T-cell (primary cell): ENCODE measurements at regions of chr7 and their contacts with region 1.

Region 1: DNA sequence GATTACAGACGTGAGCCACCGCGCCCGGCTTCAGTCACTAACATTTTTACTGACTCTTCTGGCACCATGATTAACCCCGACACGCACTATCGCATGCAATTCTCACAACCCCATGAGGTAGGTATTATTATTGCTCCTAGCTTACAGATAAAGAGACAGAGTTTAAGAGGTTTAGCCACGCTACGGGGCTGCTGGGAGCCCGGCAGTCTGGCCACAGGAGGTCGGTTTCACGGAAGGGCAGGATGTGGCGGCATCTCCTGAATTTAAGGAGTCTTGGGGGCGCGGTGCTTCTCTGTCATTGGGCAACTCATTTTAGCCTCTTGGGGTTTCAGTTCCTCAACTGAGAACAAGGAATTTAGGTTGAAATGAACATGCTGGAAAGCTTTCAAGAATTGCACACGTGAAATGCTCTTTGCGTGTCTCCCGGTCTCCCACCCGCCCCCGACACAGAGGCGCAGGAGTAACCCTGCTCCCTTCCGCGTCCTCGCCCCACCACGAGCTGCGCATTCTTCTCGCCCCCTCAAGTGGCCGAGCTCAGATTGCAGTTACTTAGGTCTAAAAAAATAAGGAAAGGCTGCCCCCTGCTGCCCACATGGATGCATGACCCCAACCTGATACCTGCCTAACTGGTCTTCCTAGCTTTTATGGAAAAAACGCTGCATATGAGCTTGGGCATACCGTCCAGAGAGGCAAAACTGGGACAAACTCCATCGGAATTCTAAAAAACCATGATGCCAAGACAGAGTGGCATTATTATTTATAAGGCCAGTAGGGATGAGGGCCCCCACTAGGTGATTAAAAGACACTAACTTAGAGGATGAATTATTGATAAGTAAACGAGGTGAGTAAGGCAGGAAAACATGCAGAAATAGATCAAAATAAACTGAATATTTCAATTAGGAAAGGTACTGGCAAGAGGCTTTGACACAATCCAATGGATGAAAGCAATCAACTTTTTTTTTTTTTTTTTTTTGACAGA is 12.4 kb downstream of the PRSS2 start:
- DNase-seq: peak; percentile 58 to 90 (median 77)
- ATAC-seq: peak; percentile 32 to 59 (median 50)
- H3K4me3 ChIP-seq: peak overlapping the region in 1 of 2 donors; percentile 48
- H3K4me3 Mint-ChIP-seq: peak overlapping the region; percentile 74 to 82 (median 75)
- H3K27ac ChIP-seq: peak overlapping the region; percentile 97
- H3K27ac Mint-ChIP-seq: peak overlapping the region; percentile 90
- H3K4me1 ChIP-seq: peaks cover 3 to 15% of the 10 kb centered on the region in 2 experiments
- H3K4me1 Mint-ChIP-seq: peaks cover 7 to 15% (median 9%) of the 10 kb centered on the region in 3 donors
- H3K27me3 ChIP-seq: no peaks in the 10 kb centered on the region
- H3K27me3 Mint-ChIP-seq: no peaks in the 10 kb centered on the region

Region 2: GRCh38 chr7:142375666-142376313 is 407.4 kb before region 1 on chr7:
- CTCF ChIA-PET with region 1: no interaction called
- POLR2A ChIA-PET with region 1: no interaction called
- DNase-seq: peak in 1 of 35 experiments; percentile 22
- ATAC-seq: no peak
- H3K4me3 ChIP-seq: no peak overlapping the region
- H3K4me3 Mint-ChIP-seq: no peak overlapping the region
- H3K27ac ChIP-seq: no peak overlapping the region
- H3K27ac Mint-ChIP-seq: peak overlapping the region in 1 of 2 donors; percentile 67
- H3K4me1 ChIP-seq: no peaks in the 10 kb centered on the region
- H3K4me1 Mint-ChIP-seq: no peaks in the 10 kb centered on the region
- H3K27me3 ChIP-seq: peaks cover 0 to 8% of the 10 kb centered on the region in 2 experiments
- H3K27me3 Mint-ChIP-seq: peaks cover 0 to 4% of the 10 kb centered on the region in 2 donors

Region 3: DNA sequence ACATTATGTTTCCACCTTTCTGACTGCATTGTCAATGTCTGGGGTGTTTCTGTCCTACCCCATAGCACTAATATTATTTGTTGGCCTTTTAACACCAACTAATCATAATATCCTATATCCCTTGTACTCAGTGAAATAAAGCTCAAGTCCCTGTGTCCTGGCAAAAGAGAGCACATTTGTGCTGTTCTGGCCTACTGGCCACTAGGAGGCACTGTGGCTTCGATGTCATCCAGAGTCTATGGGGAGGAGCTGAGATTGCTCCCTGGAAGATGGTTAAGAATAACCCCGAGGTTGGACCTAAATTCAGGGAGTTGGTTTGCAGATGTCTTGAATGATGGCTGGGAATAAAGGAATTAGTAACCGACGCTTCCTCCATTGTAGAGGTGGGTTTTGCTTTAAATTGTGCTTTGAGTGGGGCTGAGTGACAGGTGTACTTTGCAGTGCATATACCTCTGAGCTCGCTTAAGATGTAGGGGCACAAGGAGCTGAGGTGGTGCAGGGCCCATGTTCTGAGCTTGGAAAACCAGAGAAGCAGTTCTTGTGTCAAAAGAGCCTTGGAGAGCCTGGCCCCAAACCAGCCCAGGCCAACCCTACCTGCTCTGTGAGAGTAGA is 225.1 kb before region 1 on chr7:
- CTCF ChIA-PET with region 1: no interaction called
- POLR2A ChIA-PET with region 1: no interaction called
- DNase-seq: peak in 32 of 35 experiments; percentile 11 to 74 (median 40)
- ATAC-seq: peak; percentile 71 to 86 (median 73)
- H3K4me3 ChIP-seq: peak overlapping the region in 1 of 2 donors; percentile 6
- H3K4me3 Mint-ChIP-seq: peak overlapping the region in 2 of 3 donors; percentile 47 to 57
- H3K27ac ChIP-seq: no peak overlapping the region
- H3K27ac Mint-ChIP-seq: peak overlapping the region in 1 of 2 donors; percentile 3
- H3K4me1 ChIP-seq: no peaks in the 10 kb centered on the region
- H3K4me1 Mint-ChIP-seq: peaks cover 0 to 3% (median 3%) of the 10 kb centered on the region in 3 donors
- H3K27me3 ChIP-seq: peaks cover 0 to 3% of the 10 kb centered on the region in 2 experiments
- H3K27me3 Mint-ChIP-seq: peaks cover 6 to 9% of the 10 kb centered on the region in 2 donors

Region 4: GRCh38 chr7:142626420-142627035 is 156.7 kb before region 1 on chr7:
- CTCF ChIA-PET with region 1: interaction called, 4 to 49 read pairs
- POLR2A ChIA-PET with region 1: interaction called in 1 of 2 experiments, 10 read pairs
- DNase-seq: peak; percentile 25 to 79 (median 61)
- ATAC-seq: peak; percentile 57 to 84 (median 77)
- H3K4me3 ChIP-seq: peak overlapping the region in 1 of 2 donors; percentile 35
- H3K4me3 Mint-ChIP-seq: peak overlapping the region; percentile 61 to 83 (median 78)
- H3K27ac ChIP-seq: no peak overlapping the region
- H3K27ac Mint-ChIP-seq: peak overlapping the region; percentile 79 to 94
- H3K4me1 ChIP-seq: no peaks in the 10 kb centered on the region
- H3K4me1 Mint-ChIP-seq: peaks cover 0 to 4% (median 0%) of the 10 kb centered on the region in 3 donors
- H3K27me3 ChIP-seq: peaks cover 0 to 3% of the 10 kb centered on the region in 2 experiments
- H3K27me3 Mint-ChIP-seq: peaks cover 0 to 6% of the 10 kb centered on the region in 2 donors

Region 5: GRCh38 chr7:142632291-142633134 is 150.7 kb before region 1 on chr7:
- CTCF ChIA-PET with region 1: interaction called, 4 to 49 read pairs
- POLR2A ChIA-PET with region 1: interaction called, 14 to 18 read pairs
- DNase-seq: peak in 32 of 35 experiments; percentile 9 to 82 (median 42)
- ATAC-seq: peak; percentile 50 to 75 (median 70)
- H3K4me3 ChIP-seq: no peak overlapping the region
- H3K4me3 Mint-ChIP-seq: peak overlapping the region in 1 of 3 donors; percentile 34
- H3K27ac ChIP-seq: no peak overlapping the region
- H3K27ac Mint-ChIP-seq: peak overlapping the region in 1 of 2 donors; percentile 52
- H3K4me1 ChIP-seq: peaks cover 0 to 2% of the 10 kb centered on the region in 2 experiments
- H3K4me1 Mint-ChIP-seq: peaks cover 9 to 17% (median 17%) of the 10 kb centered on the region in 3 donors
- H3K27me3 ChIP-seq: no peaks in the 10 kb centered on the region
- H3K27me3 Mint-ChIP-seq: peaks cover 0 to 3% of the 10 kb centered on the region in 2 donors

Region 6: DNA sequence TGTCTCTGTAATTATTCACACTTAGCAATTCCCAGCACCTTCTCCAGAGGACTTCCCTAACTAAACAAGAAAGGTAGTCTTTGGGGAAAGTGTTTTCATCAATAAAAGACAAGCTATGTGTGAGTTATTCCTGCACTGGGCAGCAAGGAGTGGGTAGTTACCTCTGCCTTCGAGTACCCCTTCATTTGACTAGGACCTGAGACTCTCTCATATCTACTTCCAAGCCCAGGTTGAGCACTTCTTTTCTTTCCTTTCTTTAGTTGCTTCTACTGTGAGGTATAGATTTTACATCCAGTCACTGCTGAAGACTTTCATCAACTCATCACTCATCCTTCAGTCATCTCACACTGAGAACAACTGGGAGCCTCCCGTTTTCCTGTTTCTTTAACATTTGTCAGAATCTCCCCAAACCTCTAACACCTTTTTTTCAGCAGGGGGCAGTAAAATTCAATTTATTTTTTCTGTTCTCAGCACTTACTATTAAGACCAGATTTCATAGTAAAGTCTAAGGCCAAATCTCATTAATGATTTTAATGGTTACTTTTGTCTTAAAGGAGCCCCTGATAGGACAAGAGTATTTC is 114.0 kb before region 1 on chr7:
- CTCF ChIA-PET with region 1: interaction called, 14 to 66 read pairs
- POLR2A ChIA-PET with region 1: interaction called in 1 of 2 experiments, 7 read pairs
- DNase-seq: peak in 2 of 35 experiments; percentile 6 to 51
- ATAC-seq: peak in 3 of 4 experiments; percentile 33 to 45 (median 35)
- H3K4me3 ChIP-seq: no peak overlapping the region
- H3K4me3 Mint-ChIP-seq: peak overlapping the region; percentile 31 to 49 (median 41)
- H3K27ac ChIP-seq: no peak overlapping the region
- H3K27ac Mint-ChIP-seq: peak overlapping the region; percentile 76 to 83
- H3K4me1 ChIP-seq: peaks cover 13 to 18% of the 10 kb centered on the region in 2 experiments
- H3K4me1 Mint-ChIP-seq: peaks cover 24 to 32% (median 25%) of the 10 kb centered on the region in 3 donors
- H3K27me3 ChIP-seq: no peaks in the 10 kb centered on the region
- H3K27me3 Mint-ChIP-seq: no peaks in the 10 kb centered on the region

Region 7: DNA sequence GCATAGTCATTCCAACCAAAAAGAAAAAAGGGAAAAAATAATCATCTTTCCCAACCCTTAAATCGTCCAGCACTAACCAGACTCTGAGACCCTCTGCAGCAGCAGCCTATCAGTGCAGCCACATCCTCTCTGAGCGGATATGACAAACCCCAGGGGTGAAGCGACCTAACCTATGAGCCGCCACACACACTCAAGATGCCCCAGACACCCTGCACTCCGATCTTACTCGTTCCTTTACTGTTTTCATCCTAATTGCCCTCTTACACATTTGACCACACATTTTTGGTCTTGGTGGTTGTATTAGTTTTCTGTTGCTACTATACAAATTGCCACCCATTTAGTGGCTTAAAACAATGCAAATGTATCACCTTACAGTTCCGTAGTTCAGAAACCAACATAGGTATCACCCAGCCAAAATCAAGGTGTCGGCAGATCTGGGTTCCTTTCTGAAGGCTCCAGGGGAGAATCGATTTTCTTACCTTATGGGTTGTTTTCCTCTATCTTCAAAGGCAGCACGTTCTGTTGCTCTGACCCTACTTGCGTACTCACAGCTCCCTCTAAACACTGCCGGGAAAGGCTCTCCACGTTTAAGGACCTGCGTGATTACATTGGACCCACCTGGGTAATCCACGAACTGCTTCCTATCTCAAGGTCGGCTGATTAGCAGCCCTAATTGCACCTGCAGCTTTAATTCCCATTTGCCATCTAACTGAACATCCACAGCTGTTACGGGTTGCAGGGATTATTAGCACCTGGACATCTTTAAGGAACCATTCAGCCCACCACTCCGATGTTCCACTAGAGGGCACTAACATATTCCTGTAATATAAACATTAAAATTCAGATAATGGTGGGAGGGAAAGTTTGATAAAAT is 71.2 kb before region 1 on chr7:
- CTCF ChIA-PET with region 1: interaction called, 8 to 67 read pairs
- POLR2A ChIA-PET with region 1: interaction called, 4 to 9 read pairs
- DNase-seq: peak in 13 of 35 experiments; percentile 5 to 59 (median 23)
- ATAC-seq: peak; percentile 70 to 84 (median 76)
- H3K4me3 ChIP-seq: peak overlapping the region in 1 of 2 donors; percentile 39
- H3K4me3 Mint-ChIP-seq: peak overlapping the region; percentile 81 to 88 (median 82)
- H3K27ac ChIP-seq: peak overlapping the region; percentile 54
- H3K27ac Mint-ChIP-seq: peak overlapping the region; percentile 84 to 93
- H3K4me1 ChIP-seq: peaks cover 32 to 46% of the 10 kb centered on the region in 2 experiments
- H3K4me1 Mint-ChIP-seq: peaks cover 49 to 84% (median 70%) of the 10 kb centered on the region in 3 donors
- H3K27me3 ChIP-seq: no peaks in the 10 kb centered on the region
- H3K27me3 Mint-ChIP-seq: no peaks in the 10 kb centered on the region

Region 8: DNA sequence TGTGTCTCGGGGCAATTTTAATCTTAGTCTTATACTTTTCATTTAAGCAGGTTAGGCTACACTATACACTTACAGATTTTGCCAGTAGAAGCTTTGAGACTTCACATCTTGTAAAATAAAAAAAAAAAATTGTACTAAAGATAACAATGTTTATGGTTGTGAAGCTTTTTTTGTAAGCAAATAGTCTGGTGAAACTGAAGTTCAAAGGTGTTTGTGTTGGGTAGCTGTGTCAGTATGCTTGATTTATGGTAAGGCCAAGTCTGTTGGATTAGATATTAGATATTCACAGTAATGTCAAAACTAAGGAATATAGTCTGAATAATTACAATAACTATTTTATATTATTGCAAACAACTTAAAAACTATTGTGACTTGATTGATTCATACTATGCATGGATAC is 64.9 kb before region 1 on chr7:
- CTCF ChIA-PET with region 1: interaction called, 5 to 67 read pairs
- POLR2A ChIA-PET with region 1: interaction called, 4 to 14 read pairs
- DNase-seq: no peak
- ATAC-seq: no peak
- H3K4me3 ChIP-seq: no peak overlapping the region
- H3K4me3 Mint-ChIP-seq: peak overlapping the region; percentile 56 to 69 (median 59)
- H3K27ac ChIP-seq: no peak overlapping the region
- H3K27ac Mint-ChIP-seq: peak overlapping the region; percentile 80 to 82
- H3K4me1 ChIP-seq: peaks cover 34 to 62% of the 10 kb centered on the region in 2 experiments
- H3K4me1 Mint-ChIP-seq: peaks cover 48 to 77% (median 56%) of the 10 kb centered on the region in 3 donors
- H3K27me3 ChIP-seq: no peaks in the 10 kb centered on the region
- H3K27me3 Mint-ChIP-seq: no peaks in the 10 kb centered on the region

Region 9: GRCh38 chr7:142796608-142797385 is 13.6 kb after region 1 on chr7:
- CTCF ChIA-PET with region 1: interaction called, 8 to 15 read pairs
- POLR2A ChIA-PET with region 1: interaction called, 120 to 337 read pairs
- DNase-seq: peak in 4 of 35 experiments; percentile 29 to 66 (median 42)
- ATAC-seq: peak in 2 of 4 experiments; percentile 8 to 9
- H3K4me3 ChIP-seq: peak overlapping the region; percentile 92 to 97
- H3K4me3 Mint-ChIP-seq: peak overlapping the region; percentile 93 to 100 (median 99)
- H3K27ac ChIP-seq: peak overlapping the region; percentile 97
- H3K27ac Mint-ChIP-seq: peak overlapping the region; percentile 100
- H3K4me1 ChIP-seq: peaks cover 35 to 59% of the 10 kb centered on the region in 2 experiments
- H3K4me1 Mint-ChIP-seq: peaks cover 67 to 73% (median 70%) of the 10 kb centered on the region in 3 donors
- H3K27me3 ChIP-seq: no peaks in the 10 kb centered on the region
- H3K27me3 Mint-ChIP-seq: peaks cover 0 to 3% of the 10 kb centered on the region in 2 donors